Activated naive CD8-positive, alpha-beta T cell treated with anti-CD3 and anti-CD28 coated beads, Interleukin-2, amount 10 ng/mL, durations not matched to agents 7 days and 5 days (primary cell): ENCODE measurements at regions of chr15 and their contacts with region 1.

Region 1: GRCh38 chr15:100602064-100602822 is at the starts of genes ASB7 and LINS1:
- DNase-seq: peak; percentile 97
- ATAC-seq: peak; percentile 84
- H3K4me3 Mint-ChIP-seq: no peak within 1 kb of the TSS
- H3K27ac Mint-ChIP-seq: peak within 1 kb of the TSS; percentile 97
- H3K4me1 Mint-ChIP-seq: peaks cover 43% of the 10 kb centered on the region
- H3K27me3 Mint-ChIP-seq: no peaks in the 10 kb centered on the region
- total RNA-seq, gene ASB7: 21.1 to 21.5 TPM
- total RNA-seq, gene LINS1: 38.6 to 43.4 TPM

Region 2: DNA sequence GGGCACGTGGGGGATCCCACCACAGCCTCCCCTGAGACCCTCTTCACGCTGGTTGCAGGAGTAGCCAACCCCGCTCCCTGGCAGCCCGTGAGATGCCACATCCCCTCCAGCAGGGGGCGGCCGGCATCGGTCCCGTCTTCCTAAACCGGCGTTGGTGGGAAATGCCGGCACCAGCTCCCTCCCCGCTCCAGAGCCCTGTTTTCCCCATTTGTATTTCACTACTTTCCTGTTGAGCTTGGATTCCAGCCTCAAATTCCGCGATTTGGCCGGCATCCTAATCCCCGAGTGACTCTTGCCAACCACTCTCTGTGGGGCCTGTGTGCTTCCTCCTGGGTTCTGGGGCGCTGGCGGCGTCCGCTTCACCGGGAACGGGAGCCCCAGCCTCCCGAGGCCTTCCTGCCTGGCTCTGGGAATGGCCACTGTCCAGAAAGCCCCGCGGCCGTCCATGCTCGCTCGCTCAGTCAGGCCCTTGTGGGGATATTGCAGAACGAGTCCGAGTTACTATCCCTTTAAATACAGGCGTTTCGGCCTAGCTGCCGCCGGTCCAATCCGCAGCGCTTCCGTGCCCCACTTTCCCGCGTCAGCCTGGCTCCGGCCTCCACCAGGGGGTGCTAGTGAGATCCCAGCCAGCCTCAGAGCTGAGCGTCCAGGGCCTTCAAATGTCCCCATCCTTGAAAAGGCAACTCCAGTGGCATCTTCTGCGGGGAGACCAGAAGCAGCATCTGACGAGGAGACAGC is 252.4 kb before region 1 on chr15:
- POLR2A ChIA-PET with region 1: interaction called, 12 read pairs
- DNase-seq: peak; percentile 91
- ATAC-seq: peak; percentile 96
- H3K4me3 Mint-ChIP-seq: peak overlapping the region; percentile 91
- H3K27ac Mint-ChIP-seq: peak overlapping the region; percentile 86
- H3K4me1 Mint-ChIP-seq: peaks cover 6% of the 10 kb centered on the region
- H3K27me3 Mint-ChIP-seq: peaks cover 18% of the 10 kb centered on the region